ENCODE measurements at regions of chr2 and their contacts with region 1.

Region 1: DNA sequence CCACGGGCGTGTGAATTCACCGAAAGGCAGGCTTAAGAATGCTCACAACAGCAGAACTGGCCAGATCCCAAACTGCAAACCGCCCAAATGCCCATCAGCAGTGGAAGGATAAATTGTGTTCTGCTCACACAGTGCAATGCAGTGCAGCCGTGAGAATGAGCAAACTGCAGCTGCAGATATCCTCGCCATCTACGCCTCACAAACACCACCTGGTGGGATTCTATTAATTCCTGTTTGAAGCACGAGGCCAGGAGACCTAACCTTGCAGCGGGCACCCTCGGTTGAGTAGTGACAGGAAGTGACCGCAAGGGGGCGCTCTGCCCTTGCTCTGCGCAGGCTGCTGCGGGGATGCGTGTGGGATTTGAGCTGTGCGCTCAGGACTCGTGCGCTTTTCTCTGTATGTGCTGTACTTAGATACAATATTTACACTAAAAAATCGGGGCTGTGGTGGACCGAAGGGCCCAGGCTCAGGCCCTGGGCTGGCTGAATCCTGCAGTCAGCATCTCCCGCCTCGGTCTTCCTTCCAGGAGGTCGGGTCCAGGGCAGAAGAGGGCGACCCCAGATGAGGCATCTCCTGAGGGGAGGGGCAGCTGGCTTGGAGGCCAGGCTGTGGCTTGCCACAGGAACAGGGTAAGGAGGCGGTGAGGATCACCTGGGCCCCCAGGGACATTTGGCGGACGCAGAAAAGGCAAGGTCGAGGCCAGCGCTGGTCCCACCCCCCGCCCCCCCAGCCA is 19.8 kb upstream of the PDIA6 start:
- DNase-seq: peak; percentile 86
- H3K4me3 ChIP-seq: no peak overlapping the region
- H3K27ac ChIP-seq: no peak overlapping the region
- H3K4me1 ChIP-seq: no peaks in the 10 kb centered on the region
- H3K27me3 ChIP-seq: peaks cover 2% of the 10 kb centered on the region
- CTCF ChIP-seq: peak; percentile 98

Region 2: DNA sequence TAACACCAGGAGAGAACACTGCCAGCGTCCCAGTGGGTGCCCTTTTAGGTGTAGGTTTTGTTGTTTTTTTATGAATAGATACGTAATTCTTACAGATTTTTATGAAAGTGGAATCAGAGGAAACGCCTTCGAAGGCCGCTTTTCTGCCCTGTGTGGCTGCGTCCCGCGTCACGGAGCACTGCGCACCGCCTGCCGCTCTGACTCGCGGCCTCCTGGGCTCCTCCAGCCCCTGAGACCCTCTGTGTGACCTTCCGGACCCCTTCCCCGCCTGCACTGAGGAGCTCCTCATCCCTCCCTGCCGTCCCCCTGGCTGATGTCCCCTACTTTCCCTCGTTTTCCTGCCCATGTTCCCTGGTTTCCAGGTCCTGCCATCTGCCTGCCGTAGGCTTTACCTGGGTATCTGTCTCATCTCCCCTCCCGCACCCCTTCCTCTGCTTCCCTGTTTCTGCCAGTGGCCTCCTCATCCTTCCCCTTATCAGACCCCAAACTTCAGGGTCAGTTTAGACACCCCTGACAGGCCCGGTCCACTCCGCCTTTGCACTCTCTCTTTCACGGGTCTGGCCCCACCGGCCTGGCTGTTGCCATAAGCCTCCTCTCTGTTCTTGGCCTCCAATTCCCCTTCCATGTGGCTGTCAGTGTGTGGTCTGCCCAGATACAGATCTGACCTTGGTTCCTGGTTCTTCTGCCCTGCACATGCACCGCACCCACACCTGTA is 52.4 kb before region 1 on chr2:
- CTCF ChIA-PET with region 1: interaction called, 13 read pairs
- POLR2A ChIA-PET with region 1: no interaction called
- intact Hi-C with region 1: no loop called
- DNase-seq: no peak
- H3K4me3 ChIP-seq: no peak overlapping the region
- H3K27ac ChIP-seq: no peak overlapping the region
- H3K4me1 ChIP-seq: no peaks in the 10 kb centered on the region
- H3K27me3 ChIP-seq: no peaks in the 10 kb centered on the region
- CTCF ChIP-seq: no peak

Region 3: DNA sequence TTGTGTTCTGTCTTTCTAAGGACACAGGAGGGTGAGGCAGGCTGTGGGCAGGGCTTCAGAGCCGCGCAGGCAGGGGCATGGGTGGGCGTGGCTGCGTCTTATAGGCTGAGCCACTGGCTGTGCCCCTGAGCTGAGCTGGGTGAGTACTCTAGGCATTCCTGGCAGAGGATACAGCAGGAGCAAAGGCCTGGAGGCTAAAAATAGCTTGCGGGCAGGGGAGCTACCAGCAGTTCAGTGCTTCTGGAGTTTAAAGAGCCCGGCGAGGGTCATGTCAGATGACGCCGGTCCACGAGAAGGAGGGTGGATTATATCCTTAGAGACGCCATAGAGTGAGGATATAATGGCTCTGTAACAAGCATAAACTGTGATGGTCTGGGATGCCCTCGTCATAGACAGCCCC is 11.7 kb after region 1 on chr2:
- CTCF ChIA-PET with region 1: interaction called, 14 read pairs
- POLR2A ChIA-PET with region 1: no interaction called
- intact Hi-C with region 1: no loop called
- DNase-seq: peak; percentile 78
- H3K4me3 ChIP-seq: no peak overlapping the region
- H3K27ac ChIP-seq: no peak overlapping the region
- H3K4me1 ChIP-seq: no peaks in the 10 kb centered on the region
- H3K27me3 ChIP-seq: no peaks in the 10 kb centered on the region
- CTCF ChIP-seq: no peak

Region 4: GRCh38 chr2:10911261-10912075 is 79.1 kb after region 1 on chr2 and contains the start of gene KCNF1:
- CTCF ChIA-PET with region 1: interaction called, 7 read pairs
- POLR2A ChIA-PET with region 1: no interaction called
- intact Hi-C with region 1: loop called (anchors 5 kb)
- DNase-seq: peak; percentile 80
- H3K4me3 ChIP-seq: peak within 1 kb of the TSS; percentile 52
- H3K27ac ChIP-seq: no peak within 1 kb of the TSS
- H3K4me1 ChIP-seq: peaks cover 4% of the 10 kb centered on the region
- H3K27me3 ChIP-seq: peaks cover 6% of the 10 kb centered on the region
- CTCF ChIP-seq: peak; percentile 46
- total RNA-seq, gene KCNF1: 0.32 and 0.70 TPM in 2 replicates

Region 5: GRCh38 chr2:11129598-11130449 is 297.5 kb after region 1 on chr2:
- CTCF ChIA-PET with region 1: interaction called, 35 read pairs
- POLR2A ChIA-PET with region 1: no interaction called
- intact Hi-C with region 1: no loop called
- DNase-seq: peak; percentile 71
- H3K4me3 ChIP-seq: peak overlapping the region; percentile 34
- H3K27ac ChIP-seq: no peak overlapping the region
- H3K4me1 ChIP-seq: peaks cover 14% of the 10 kb centered on the region
- H3K27me3 ChIP-seq: no peaks in the 10 kb centered on the region
- CTCF ChIP-seq: peak; percentile 55

Region 6: GRCh38 chr2:11583840-11584524 is 751.6 kb after region 1 on chr2:
- CTCF ChIA-PET with region 1: interaction called, 8 read pairs
- POLR2A ChIA-PET with region 1: no interaction called
- intact Hi-C with region 1: loop called (anchors 2 kb)
- DNase-seq: peak; percentile 93
- H3K4me3 ChIP-seq: no peak overlapping the region
- H3K27ac ChIP-seq: no peak overlapping the region
- H3K4me1 ChIP-seq: peaks cover 13% of the 10 kb centered on the region
- H3K27me3 ChIP-seq: no peaks in the 10 kb centered on the region
- CTCF ChIP-seq: peak; percentile 94